WTC11 (cell line): ENCODE measurements at regions of chr11 and their contacts with region 1.

Region 1: GRCh38 chr11:12377824-12378593 is 638 bp downstream of the PARVA start:
- DNase-seq: peak; percentile 82
- ATAC-seq: peak; percentile 82
- H3K4me3 Mint-ChIP-seq: peak overlapping the region; percentile 94
- H3K27ac Mint-ChIP-seq: peak overlapping the region; percentile 100
- H3K4me1 Mint-ChIP-seq: peaks cover 23% of the 10 kb centered on the region
- H3K27me3 Mint-ChIP-seq: peaks cover 29% of the 10 kb centered on the region
- CTCF ChIP-seq: no peak

Region 2: GRCh38 chr11:12029738-12030363 is 348.2 kb before region 1 on chr11:
- CTCF ChIA-PET with region 1: no interaction called
- POLR2A ChIA-PET with region 1: no interaction called
- DNase-seq: no peak
- ATAC-seq: no peak
- H3K4me3 Mint-ChIP-seq: no peak overlapping the region
- H3K27ac Mint-ChIP-seq: no peak overlapping the region
- H3K4me1 Mint-ChIP-seq: peaks cover 5% of the 10 kb centered on the region
- H3K27me3 Mint-ChIP-seq: no peaks in the 10 kb centered on the region
- CTCF ChIP-seq: no peak

Region 3: GRCh38 chr11:12864316-12865156 is 486.5 kb after region 1 on chr11:
- CTCF ChIA-PET with region 1: no interaction called
- POLR2A ChIA-PET with region 1: interaction called, 11 read pairs
- DNase-seq: peak; percentile 53
- ATAC-seq: peak; percentile 86
- H3K4me3 Mint-ChIP-seq: peak overlapping the region; percentile 61
- H3K27ac Mint-ChIP-seq: peak overlapping the region; percentile 100
- H3K4me1 Mint-ChIP-seq: peaks cover 92% of the 10 kb centered on the region
- H3K27me3 Mint-ChIP-seq: no peaks in the 10 kb centered on the region
- CTCF ChIP-seq: no peak